ENCODE measurements at regions of chr19 and their contacts with region 1.

Region 1: DNA sequence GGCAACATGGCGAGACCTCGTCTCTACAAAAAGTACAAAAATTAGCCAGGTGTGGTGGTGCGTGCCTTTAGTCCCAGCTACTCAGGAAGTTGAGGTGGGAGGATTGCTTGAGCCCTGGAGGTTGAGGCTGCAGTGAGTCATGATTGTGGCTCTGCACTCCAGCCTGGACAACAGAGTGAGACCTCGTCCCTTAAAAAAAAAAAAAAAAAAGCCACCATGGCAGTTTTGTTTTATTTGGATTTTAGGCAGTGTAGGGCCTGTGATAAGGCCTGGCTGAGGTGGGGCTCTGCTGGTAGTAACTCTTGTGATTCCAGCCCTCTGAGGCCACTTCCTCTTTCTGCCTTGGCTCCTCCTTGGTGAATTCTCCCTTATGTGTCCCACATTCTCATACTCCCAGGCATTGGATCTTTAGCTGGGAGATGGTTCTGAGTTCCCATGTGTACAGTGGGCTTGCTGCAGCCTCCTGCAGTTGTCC is 39.2 kb downstream of the GATAD2A start:
- DNase-seq: peak; percentile 29
- ATAC-seq: peak; percentile 10
- H3K4me3 Mint-ChIP-seq: peak overlapping the region; percentile 7
- H3K27ac Mint-ChIP-seq: peak overlapping the region; percentile 85
- H3K4me1 Mint-ChIP-seq: peaks cover 73% of the 10 kb centered on the region
- H3K27me3 Mint-ChIP-seq: no peaks in the 10 kb centered on the region

Region 2: GRCh38 chr19:19410275-19411192 is 34.2 kb before region 1 on chr19:
- CTCF ChIA-PET with region 1: interaction called, 3 read pairs
- POLR2A ChIA-PET with region 1: no interaction called
- intact Hi-C with region 1: loop called (anchors 2 kb)
- DNase-seq: peak; percentile 68
- ATAC-seq: peak; percentile 77
- H3K4me3 Mint-ChIP-seq: no peak overlapping the region
- H3K27ac Mint-ChIP-seq: peak overlapping the region; percentile 55
- H3K4me1 Mint-ChIP-seq: peaks cover 70% of the 10 kb centered on the region
- H3K27me3 Mint-ChIP-seq: no peaks in the 10 kb centered on the region

Region 3: GRCh38 chr19:19420570-19421298 is 24.0 kb before region 1 on chr19:
- CTCF ChIA-PET with region 1: no interaction called
- POLR2A ChIA-PET with region 1: no interaction called
- intact Hi-C with region 1: loop called in 1 of 2 experiments (anchors 1 kb)
- DNase-seq: peak; percentile 57
- ATAC-seq: peak; percentile 89
- H3K4me3 Mint-ChIP-seq: no peak overlapping the region
- H3K27ac Mint-ChIP-seq: peak overlapping the region; percentile 58
- H3K4me1 Mint-ChIP-seq: peaks cover 74% of the 10 kb centered on the region
- H3K27me3 Mint-ChIP-seq: no peaks in the 10 kb centered on the region

Region 4: DNA sequence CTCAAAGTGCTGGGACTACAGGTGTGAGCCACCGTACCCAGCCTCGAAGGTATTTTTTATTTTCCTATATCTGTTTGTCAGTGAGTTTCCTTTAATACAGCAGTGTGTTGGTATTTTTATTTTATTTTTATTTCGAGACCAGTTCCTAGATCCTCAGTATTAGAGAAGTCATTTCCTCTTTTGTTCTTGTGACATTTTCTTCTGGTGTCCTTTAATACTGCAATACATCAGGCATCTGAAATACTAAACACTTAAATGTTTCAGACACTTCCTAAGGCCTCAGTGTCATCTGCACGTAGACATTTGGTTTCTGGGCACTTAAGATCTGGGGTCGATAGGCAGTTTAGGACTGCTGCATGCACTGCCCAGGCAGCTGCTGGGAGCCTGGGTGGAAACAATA is 16.8 kb before region 1 on chr19:
- CTCF ChIA-PET with region 1: interaction called, 3 read pairs
- POLR2A ChIA-PET with region 1: no interaction called
- intact Hi-C with region 1: loop called in 1 of 2 experiments (anchors 2 kb)
- DNase-seq: no peak
- ATAC-seq: no peak
- H3K4me3 Mint-ChIP-seq: no peak overlapping the region
- H3K27ac Mint-ChIP-seq: peak overlapping the region; percentile 72
- H3K4me1 Mint-ChIP-seq: peaks cover 72% of the 10 kb centered on the region
- H3K27me3 Mint-ChIP-seq: no peaks in the 10 kb centered on the region

Region 5: GRCh38 chr19:19475849-19476828 is 31.4 kb after region 1 on chr19:
- CTCF ChIA-PET with region 1: interaction called, 3 read pairs
- POLR2A ChIA-PET with region 1: no interaction called
- intact Hi-C with region 1: loop called (anchors 1 to 2 kb)
- DNase-seq: peak; percentile 25
- ATAC-seq: no peak
- H3K4me3 Mint-ChIP-seq: no peak overlapping the region
- H3K27ac Mint-ChIP-seq: no peak overlapping the region
- H3K4me1 Mint-ChIP-seq: peaks cover 77% of the 10 kb centered on the region
- H3K27me3 Mint-ChIP-seq: no peaks in the 10 kb centered on the region

Region 6: GRCh38 chr19:19502808-19503602 is 58.3 kb after region 1 on chr19:
- CTCF ChIA-PET with region 1: no interaction called
- POLR2A ChIA-PET with region 1: no interaction called
- intact Hi-C with region 1: no loop called
- DNase-seq: no peak
- ATAC-seq: no peak
- H3K4me3 Mint-ChIP-seq: no peak overlapping the region
- H3K27ac Mint-ChIP-seq: peak overlapping the region; percentile 20
- H3K4me1 Mint-ChIP-seq: no peaks in the 10 kb centered on the region
- H3K27me3 Mint-ChIP-seq: no peaks in the 10 kb centered on the region